ENCODE measurements at regions of chr3 and their contacts with region 1.

Region 1: DNA sequence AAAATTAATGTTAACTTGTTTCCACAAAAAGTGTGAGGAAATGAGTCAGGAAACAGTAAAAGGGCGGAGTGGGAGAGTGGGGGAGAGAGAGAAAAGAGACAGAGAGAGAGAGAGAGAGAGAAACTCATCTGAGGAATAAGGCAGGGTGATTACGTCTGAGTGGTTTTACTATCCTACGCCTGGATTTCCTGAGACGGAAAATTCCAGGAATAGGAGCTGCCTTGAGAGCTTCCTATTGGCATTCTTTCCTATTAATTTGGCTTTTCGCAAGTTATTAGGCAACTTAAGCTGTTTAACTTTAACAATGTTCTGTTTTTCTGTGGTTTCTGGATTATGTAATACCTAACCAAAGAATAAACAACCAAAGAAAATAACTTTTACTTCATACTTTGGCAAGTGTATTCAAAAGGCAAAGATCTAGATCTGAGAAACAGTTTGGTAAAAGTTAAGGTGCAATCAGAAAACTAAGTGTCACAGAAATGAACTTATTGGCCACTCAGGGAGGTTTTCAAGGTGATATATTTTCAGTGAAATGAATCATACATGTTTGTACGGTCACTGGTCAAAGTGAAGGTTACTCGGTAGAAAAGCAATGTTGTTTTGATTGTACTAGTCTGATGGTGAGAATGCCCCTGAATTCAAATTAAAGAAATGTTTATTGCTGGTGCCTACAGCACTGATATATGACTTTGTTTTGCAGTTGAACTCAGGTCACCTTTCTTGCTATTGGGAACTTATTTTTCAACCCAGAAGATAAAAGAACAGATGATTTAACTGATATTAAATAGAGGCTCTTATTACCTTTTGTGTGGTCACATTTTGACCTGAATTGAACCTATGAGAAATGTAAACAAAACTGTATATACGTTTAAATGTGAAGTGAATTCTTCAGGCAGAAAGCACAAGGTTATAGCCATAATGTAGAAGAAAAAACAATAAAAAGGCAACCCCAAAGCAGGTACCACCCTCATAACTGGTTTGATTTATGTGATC is 39.9 kb upstream of the TNFSF10 start:
- DNase-seq: peak; percentile 28 to 97
- H3K4me3 ChIP-seq: peak overlapping the region; percentile 27; the same call in 1 of the 2 replicates
- H3K27ac ChIP-seq: peak overlapping the region; percentile 88
- H3K4me1 ChIP-seq: peaks cover 64% of the 10 kb centered on the region
- H3K27me3 ChIP-seq: no peaks in the 10 kb centered on the region
- CTCF ChIP-seq: no peak; the same call in 1 of the 2 replicates

Region 2: GRCh38 chr3:172270557-172271166 is 292.5 kb before region 1 on chr3:
- CTCF ChIA-PET with region 1: no interaction called
- POLR2A ChIA-PET with region 1: no interaction called
- intact Hi-C with region 1: no loop called
- DNase-seq: no peak
- H3K4me3 ChIP-seq: no peak overlapping the region
- H3K27ac ChIP-seq: no peak overlapping the region
- H3K4me1 ChIP-seq: peaks cover 20% of the 10 kb centered on the region; the same call in 1 of the 2 replicates
- H3K27me3 ChIP-seq: no peaks in the 10 kb centered on the region
- CTCF ChIP-seq: no peak

Region 3: GRCh38 chr3:172516318-172517214 is 46.6 kb before region 1 on chr3:
- CTCF ChIA-PET with region 1: no interaction called
- POLR2A ChIA-PET with region 1: no interaction called
- intact Hi-C with region 1: loop called (anchors 2 kb)
- DNase-seq: peak in 1 of 2 experiments; percentile 61
- H3K4me3 ChIP-seq: no peak overlapping the region
- H3K27ac ChIP-seq: no peak overlapping the region
- H3K4me1 ChIP-seq: no peaks in the 10 kb centered on the region
- H3K27me3 ChIP-seq: no peaks in the 10 kb centered on the region
- CTCF ChIP-seq: no peak

Region 4: DNA sequence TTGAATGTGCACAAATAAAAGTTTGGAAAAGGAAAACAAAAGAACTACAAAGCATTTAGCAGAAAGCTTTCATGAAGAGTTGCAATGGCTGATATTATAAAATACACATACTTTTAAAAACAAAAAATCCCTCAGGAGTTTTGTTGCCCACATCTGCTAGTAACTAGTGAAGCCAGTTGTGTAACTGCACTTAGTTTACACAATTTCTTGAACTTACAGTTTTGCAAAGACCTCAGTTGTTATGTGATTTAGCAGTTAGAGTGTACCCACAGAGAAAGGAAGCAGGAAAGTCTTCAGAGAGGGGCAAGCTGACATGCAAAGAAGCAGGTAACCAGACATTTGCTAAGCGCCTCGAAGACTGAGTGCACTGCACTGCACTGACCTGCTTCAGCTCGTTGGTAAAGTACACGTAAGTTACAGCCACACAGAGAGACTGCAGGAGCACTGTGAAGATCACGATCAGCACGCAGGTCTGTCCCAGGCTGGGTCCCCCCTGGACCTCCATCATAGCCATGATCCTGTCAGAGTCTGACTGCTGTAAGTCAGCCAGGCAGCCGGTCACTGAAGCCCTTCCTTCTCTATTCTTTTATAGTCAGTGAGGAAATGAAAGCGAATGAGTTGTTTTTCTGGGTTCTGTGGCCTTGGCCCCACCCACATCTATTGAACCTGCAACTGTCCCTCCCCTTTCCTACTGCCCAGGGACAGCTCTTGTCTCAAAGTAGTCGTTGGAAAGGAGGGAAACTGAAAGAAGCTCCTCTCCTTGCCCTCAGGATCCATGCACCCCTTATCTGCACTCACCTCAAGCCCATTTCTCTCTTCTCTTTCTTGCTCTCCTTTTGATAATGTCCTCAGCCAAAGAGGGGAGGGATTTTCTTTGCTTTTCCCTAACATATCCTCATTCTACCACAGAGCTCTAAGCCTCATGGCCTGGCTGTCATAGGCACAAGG is 40.0 kb before region 1 on chr3 and contains the start of gene TNFSF10:
- CTCF ChIA-PET with region 1: no interaction called
- POLR2A ChIA-PET with region 1: no interaction called
- intact Hi-C with region 1: loop called (anchors 2 kb)
- DNase-seq: peak; percentile 48 to 62
- H3K4me3 ChIP-seq: peak within 1 kb of the TSS; percentile 24; the same call in 1 of the 2 replicates
- H3K27ac ChIP-seq: no peak within 1 kb of the TSS
- H3K4me1 ChIP-seq: peaks cover 7% of the 10 kb centered on the region
- H3K27me3 ChIP-seq: no peaks in the 10 kb centered on the region
- CTCF ChIP-seq: no peak
- total RNA-seq, gene TNFSF10: 18.3 and 21.4 TPM in 2 replicates

Region 5: GRCh38 chr3:172550347-172550943 is 12.7 kb before region 1 on chr3:
- CTCF ChIA-PET with region 1: no interaction called
- POLR2A ChIA-PET with region 1: no interaction called
- intact Hi-C with region 1: loop called (anchors 1 kb)
- DNase-seq: peak; percentile 79 to 88
- H3K4me3 ChIP-seq: no peak overlapping the region
- H3K27ac ChIP-seq: no peak overlapping the region
- H3K4me1 ChIP-seq: peaks cover 50% of the 10 kb centered on the region
- H3K27me3 ChIP-seq: no peaks in the 10 kb centered on the region
- CTCF ChIP-seq: no peak

Region 6: DNA sequence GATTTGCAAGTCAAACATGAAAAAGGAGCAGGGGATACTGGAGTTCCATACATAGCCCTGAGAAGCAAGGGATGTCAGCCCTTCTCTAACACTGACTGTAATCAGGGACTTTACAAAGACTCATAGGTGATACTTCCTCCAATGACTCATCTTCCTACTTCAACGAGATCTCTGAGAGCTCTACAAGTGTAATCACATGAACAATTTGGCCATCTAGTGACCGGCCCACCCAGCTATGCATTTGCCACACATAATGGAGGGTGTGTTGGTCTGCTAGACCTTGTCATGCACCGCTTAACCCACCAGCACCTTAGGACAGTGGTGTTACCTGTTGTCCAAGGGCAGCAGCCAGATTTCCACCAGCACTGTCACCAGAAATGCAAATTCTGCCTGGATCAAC is 72.4 kb after region 1 on chr3:
- CTCF ChIA-PET with region 1: no interaction called
- POLR2A ChIA-PET with region 1: no interaction called
- intact Hi-C with region 1: loop called (anchors 5 kb)
- DNase-seq: peak; percentile 71 to 86
- H3K4me3 ChIP-seq: no peak overlapping the region
- H3K27ac ChIP-seq: peak overlapping the region; percentile 54
- H3K4me1 ChIP-seq: peaks cover 37% of the 10 kb centered on the region
- H3K27me3 ChIP-seq: no peaks in the 10 kb centered on the region
- CTCF ChIP-seq: no peak

Region 7: GRCh38 chr3:172646439-172647015 is 83.4 kb after region 1 on chr3:
- CTCF ChIA-PET with region 1: no interaction called
- POLR2A ChIA-PET with region 1: no interaction called
- intact Hi-C with region 1: no loop called
- DNase-seq: peak in 1 of 2 experiments; percentile 63
- H3K4me3 ChIP-seq: no peak overlapping the region
- H3K27ac ChIP-seq: no peak overlapping the region
- H3K4me1 ChIP-seq: peaks cover 6% of the 10 kb centered on the region; the same call in 1 of the 2 replicates
- H3K27me3 ChIP-seq: no peaks in the 10 kb centered on the region
- CTCF ChIP-seq: no peak

Region 8: DNA sequence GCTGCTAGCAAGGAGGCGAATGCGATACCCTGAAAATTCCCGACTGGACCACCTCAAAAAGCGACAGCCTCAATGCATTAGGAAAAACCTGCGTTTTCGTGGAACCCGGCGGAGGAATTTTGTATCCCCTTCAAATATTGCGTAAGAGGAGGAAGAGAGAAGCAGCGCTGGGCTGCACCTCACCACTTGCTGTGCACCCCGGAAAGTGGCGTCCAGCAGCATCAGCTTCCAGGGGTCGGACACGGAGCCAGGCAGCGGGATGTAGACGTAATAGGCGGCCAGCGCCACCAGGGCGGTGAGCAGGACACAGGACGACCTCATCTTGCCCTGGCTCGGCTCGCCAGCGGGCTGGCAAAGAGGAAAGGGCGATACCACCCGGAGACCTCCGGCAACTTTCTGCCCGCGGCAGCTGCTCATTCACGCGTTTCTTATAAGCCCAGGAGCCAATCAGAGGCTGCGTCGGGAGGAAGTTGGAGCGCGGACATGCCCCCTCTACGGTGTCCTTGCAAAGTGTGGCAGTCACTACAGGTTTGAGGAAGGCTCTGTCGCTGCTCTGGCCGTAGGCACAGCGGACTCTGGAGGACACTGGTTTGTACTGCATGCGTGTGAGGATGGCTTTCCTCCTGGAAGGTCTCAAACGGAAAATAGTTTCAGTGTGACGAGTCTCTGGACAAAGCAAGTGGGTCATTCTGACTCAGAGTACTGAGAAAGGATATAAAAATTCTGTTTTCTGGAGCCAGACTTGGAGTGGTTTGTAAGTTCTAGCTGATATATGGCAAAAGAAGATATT is 147.7 kb after region 1 on chr3 and contains the start of gene NCEH1:
- CTCF ChIA-PET with region 1: no interaction called
- POLR2A ChIA-PET with region 1: no interaction called
- intact Hi-C with region 1: loop called (anchors 1 kb)
- DNase-seq: peak; percentile 98 to 100
- H3K4me3 ChIP-seq: peak within 1 kb of the TSS; percentile 83
- H3K27ac ChIP-seq: peak within 1 kb of the TSS; percentile 98
- H3K4me1 ChIP-seq: peaks cover 62% of the 10 kb centered on the region
- H3K27me3 ChIP-seq: no peaks in the 10 kb centered on the region
- CTCF ChIP-seq: peak; percentile 89
- total RNA-seq, gene NCEH1: 39.6 and 43.5 TPM in 2 replicates